ENCODE measurements at regions of chr4 and their contacts with region 1.

Region 1: GRCh38 chr4:70651864-70652506 is 14.3 kb downstream of the JCHAIN start:
- DNase-seq: no peak
- ATAC-seq: peak; percentile 67
- H3K4me3 Mint-ChIP-seq: no peak overlapping the region
- H3K27ac Mint-ChIP-seq: no peak overlapping the region
- H3K4me1 Mint-ChIP-seq: peaks cover 5% of the 10 kb centered on the region
- H3K27me3 Mint-ChIP-seq: no peaks in the 10 kb centered on the region
- CTCF ChIP-seq: no peak

Region 2: GRCh38 chr4:70027017-70027416 is 625.0 kb before region 1 on chr4:
- CTCF ChIA-PET with region 1: no interaction called
- POLR2A ChIA-PET with region 1: no interaction called
- intact Hi-C with region 1: no loop called
- DNase-seq: no peak
- ATAC-seq: no peak
- H3K4me3 Mint-ChIP-seq: no peak overlapping the region
- H3K27ac Mint-ChIP-seq: no peak overlapping the region
- H3K4me1 Mint-ChIP-seq: no peaks in the 10 kb centered on the region
- H3K27me3 Mint-ChIP-seq: no peaks in the 10 kb centered on the region
- CTCF ChIP-seq: no peak

Region 3: DNA sequence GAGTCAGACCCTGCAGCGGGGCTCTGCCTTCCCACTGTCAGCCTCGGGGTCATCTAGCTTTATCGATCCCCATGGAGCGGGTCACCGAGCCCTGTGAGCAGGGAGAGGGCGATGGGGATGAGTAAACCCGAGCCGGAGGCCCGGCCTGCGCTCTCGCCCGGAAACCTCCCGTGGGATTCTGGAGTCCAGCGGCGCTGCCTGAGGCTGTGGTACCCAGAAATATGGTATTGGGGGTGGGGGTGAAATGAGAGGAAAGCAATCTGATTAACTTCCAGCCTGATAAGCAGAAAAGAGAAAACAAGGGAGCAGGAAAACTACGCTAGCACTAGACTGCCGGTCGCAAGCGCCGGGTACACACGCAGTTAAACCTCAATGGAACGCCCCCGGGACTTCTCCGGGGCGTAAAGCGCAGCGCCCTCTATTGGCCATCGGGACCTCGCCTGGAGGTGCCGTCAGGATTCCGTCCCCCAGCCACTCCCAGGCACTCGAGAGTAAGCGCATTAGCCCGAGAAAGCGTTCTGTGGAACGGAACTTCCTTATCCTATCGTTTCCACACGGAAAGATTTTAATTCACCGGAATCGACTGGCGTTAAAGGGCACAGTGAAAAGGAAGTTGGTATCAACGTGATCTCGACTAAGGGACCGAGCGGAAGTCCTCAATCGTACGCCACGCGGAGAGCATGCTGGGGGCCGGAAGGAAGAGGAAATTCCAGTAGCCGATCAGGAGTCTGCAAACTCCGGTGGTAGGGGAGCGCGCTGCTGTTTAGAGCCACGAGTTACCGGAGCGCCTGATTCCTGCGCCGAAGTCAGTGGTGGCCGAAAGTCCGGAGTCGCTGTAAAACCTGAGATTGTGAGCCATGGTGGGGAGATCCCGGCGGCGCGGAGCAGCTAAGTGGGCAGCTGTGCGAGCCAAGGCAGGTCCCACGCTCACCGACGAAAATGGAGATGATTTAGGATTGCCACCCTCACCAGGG is 36.1 kb after region 1 on chr4 and contains the start of gene UTP3:
- CTCF ChIA-PET with region 1: interaction called, 6 read pairs
- POLR2A ChIA-PET with region 1: interaction called, 5 read pairs
- intact Hi-C with region 1: loop called (anchors 1 kb)
- DNase-seq: peak; percentile 83
- ATAC-seq: peak; percentile 88
- H3K4me3 Mint-ChIP-seq: peak within 1 kb of the TSS; percentile 99
- H3K27ac Mint-ChIP-seq: peak within 1 kb of the TSS; percentile 100
- H3K4me1 Mint-ChIP-seq: peaks cover 48% of the 10 kb centered on the region
- H3K27me3 Mint-ChIP-seq: no peaks in the 10 kb centered on the region
- CTCF ChIP-seq: peak; percentile 96
- total RNA-seq, gene UTP3: 38.5 and 40.1 TPM in 2 replicates

Region 4: DNA sequence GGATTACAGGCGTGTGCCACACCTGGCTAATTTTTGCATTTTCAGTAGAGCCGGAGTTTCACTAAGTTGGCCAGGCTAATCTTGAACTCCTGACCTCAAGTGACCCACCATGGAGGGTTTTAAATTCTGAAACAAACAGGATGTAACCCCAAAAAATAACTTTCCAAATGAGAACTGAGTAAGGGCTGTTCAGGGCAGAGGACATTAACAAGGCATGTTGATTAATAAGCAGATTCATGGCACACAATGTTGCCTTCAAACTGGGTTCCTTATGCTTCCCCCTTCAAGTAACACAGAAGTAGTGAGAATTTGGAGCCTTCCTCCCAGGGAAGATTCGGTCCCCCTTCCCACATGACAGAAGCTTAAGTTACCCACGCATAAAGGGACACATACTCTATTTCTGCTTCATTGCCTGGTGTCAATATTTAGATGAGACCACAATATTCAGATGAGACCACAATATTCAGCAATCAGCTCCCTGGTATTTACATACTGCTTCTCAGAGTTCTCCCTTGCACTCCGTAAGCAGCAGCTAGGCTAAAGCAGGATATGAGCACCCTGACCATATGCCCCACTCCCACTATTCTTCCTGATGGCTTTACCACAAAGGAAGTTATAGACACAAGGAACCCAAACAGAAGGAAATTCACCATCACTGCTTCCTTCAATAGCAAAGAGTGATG is 166.3 kb after region 1 on chr4:
- CTCF ChIA-PET with region 1: no interaction called
- POLR2A ChIA-PET with region 1: no interaction called
- intact Hi-C with region 1: loop called (anchors 5 kb)
- DNase-seq: no peak
- ATAC-seq: peak; percentile 49
- H3K4me3 Mint-ChIP-seq: no peak overlapping the region
- H3K27ac Mint-ChIP-seq: no peak overlapping the region
- H3K4me1 Mint-ChIP-seq: peaks cover 10% of the 10 kb centered on the region
- H3K27me3 Mint-ChIP-seq: no peaks in the 10 kb centered on the region
- CTCF ChIP-seq: no peak

Region 5: GRCh38 chr4:70948665-70949260 is 296.8 kb after region 1 on chr4:
- CTCF ChIA-PET with region 1: interaction called, 4 read pairs
- POLR2A ChIA-PET with region 1: no interaction called
- intact Hi-C with region 1: loop called (anchors 2 kb)
- DNase-seq: no peak
- ATAC-seq: peak; percentile 47
- H3K4me3 Mint-ChIP-seq: peak overlapping the region; percentile 13
- H3K27ac Mint-ChIP-seq: no peak overlapping the region
- H3K4me1 Mint-ChIP-seq: peaks cover 34% of the 10 kb centered on the region
- H3K27me3 Mint-ChIP-seq: no peaks in the 10 kb centered on the region
- CTCF ChIP-seq: no peak

Region 6: GRCh38 chr4:71184195-71184781 is 532.3 kb after region 1 on chr4:
- CTCF ChIA-PET with region 1: no interaction called
- POLR2A ChIA-PET with region 1: no interaction called
- intact Hi-C with region 1: loop called (anchors 1 kb)
- DNase-seq: no peak
- ATAC-seq: peak; percentile 55
- H3K4me3 Mint-ChIP-seq: peak overlapping the region; percentile 33
- H3K27ac Mint-ChIP-seq: no peak overlapping the region
- H3K4me1 Mint-ChIP-seq: peaks cover 24% of the 10 kb centered on the region
- H3K27me3 Mint-ChIP-seq: peaks cover 30% of the 10 kb centered on the region
- CTCF ChIP-seq: no peak

Region 7: DNA sequence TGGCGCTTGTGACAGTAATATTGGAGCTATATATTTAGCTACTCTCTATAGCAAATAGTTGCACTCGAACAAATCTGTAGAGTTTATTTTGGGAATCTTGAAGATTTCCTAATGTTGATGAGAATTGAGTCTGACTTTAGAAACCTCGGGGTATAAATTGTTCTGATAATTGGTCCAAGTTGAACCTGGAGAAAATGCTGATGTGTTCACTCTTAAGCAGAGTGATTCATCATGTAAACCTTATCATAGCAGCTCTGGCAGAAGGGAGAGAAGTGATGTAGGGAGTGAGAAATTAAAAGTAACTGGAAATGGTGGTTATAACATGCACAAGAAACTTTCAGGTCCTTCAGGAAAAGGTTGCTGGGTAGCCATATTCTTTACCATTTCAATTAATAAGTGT is 670.4 kb after region 1 on chr4:
- CTCF ChIA-PET with region 1: no interaction called
- POLR2A ChIA-PET with region 1: no interaction called
- intact Hi-C with region 1: no loop called
- DNase-seq: no peak
- ATAC-seq: no peak
- H3K4me3 Mint-ChIP-seq: no peak overlapping the region
- H3K27ac Mint-ChIP-seq: no peak overlapping the region
- H3K4me1 Mint-ChIP-seq: no peaks in the 10 kb centered on the region
- H3K27me3 Mint-ChIP-seq: peaks cover 6% of the 10 kb centered on the region
- CTCF ChIP-seq: no peak

Region 8: DNA sequence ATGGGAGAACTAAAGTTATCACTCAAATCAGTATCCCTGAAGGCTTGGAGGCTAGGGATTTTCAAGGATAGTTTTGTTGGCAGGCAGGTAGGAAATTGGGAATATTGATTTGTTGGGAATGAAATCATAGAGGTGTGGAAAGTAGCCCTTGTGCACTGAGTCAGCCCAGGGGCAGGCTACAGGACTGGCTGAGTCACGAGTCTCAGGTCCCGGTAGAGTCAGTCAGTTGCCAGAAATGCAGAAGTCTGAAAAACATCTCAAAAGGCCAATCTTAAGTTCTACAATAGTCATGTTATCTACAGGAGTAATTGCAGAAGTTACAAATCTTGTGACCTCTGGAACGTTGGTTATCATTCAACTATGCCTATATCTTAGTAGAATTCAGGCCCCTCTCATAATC is 978.8 kb after region 1 on chr4:
- CTCF ChIA-PET with region 1: no interaction called
- POLR2A ChIA-PET with region 1: no interaction called
- intact Hi-C with region 1: no loop called
- DNase-seq: no peak
- ATAC-seq: no peak
- H3K4me3 Mint-ChIP-seq: no peak overlapping the region
- H3K27ac Mint-ChIP-seq: no peak overlapping the region
- H3K4me1 Mint-ChIP-seq: no peaks in the 10 kb centered on the region
- H3K27me3 Mint-ChIP-seq: no peaks in the 10 kb centered on the region
- CTCF ChIP-seq: no peak

Region 9: DNA sequence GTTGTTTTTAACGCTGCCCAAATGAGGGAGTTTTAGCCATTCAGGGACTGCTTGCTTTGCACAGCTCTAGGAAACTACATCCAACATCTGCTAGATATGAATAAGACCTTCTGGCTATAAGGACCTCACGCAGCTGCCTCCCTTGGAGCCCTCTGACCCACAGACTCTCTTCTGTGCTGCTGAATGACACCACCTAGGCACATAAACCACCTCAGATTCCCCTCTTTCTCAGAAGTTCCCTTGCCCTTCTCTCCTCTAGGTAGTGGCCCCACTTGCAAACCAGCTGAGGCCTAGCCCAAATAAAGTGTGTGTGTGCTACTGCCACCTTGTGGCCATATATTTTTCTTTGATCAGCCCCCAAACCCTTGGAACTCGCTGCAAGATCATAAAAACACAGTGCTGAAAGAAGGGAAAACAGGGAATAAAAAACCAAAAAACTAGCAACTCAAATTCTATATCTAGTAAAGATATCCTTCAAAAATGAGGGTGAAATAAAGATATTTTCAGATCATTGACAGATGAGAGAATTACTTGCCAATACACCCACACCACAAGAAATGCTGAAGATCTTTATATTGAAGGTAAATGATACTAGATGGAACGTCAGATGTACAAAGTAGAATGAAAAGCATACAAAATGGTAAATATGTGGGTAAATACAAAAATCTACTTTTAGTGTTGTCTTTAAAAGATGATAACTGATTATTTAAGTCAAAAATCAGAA is 1651.2 kb after region 1 on chr4:
- CTCF ChIA-PET with region 1: interaction called, 3 read pairs
- POLR2A ChIA-PET with region 1: no interaction called
- intact Hi-C with region 1: loop called (anchors 1 kb)
- DNase-seq: peak; percentile 15
- ATAC-seq: peak; percentile 50
- H3K4me3 Mint-ChIP-seq: no peak overlapping the region
- H3K27ac Mint-ChIP-seq: no peak overlapping the region
- H3K4me1 Mint-ChIP-seq: no peaks in the 10 kb centered on the region
- H3K27me3 Mint-ChIP-seq: no peaks in the 10 kb centered on the region
- CTCF ChIP-seq: no peak

Measured in activated B cell treated with CpG ODN at 0.5 μM for 24 hours (primary cell).